CD8-positive, alpha-beta memory T cell (primary cell): ENCODE measurements at regions of chr1 and their contacts with region 1.

Region 1: GRCh38 chr1:11661103-11661502 is 2.9 kb upstream of the FBXO6 start:
- DNase-seq: no peak
- H3K4me3 ChIP-seq: no peak overlapping the region
- H3K4me3 Mint-ChIP-seq: peak overlapping the region in 1 of 7 donors; percentile 54
- H3K27ac ChIP-seq: no peak overlapping the region
- H3K27ac Mint-ChIP-seq: peak overlapping the region in 1 of 8 donors; percentile 50
- H3K4me1 ChIP-seq: peaks cover 8% of the 10 kb centered on the region
- H3K4me1 Mint-ChIP-seq: peaks cover under 1 to 7% (median 5%) of the 10 kb centered on the region in 3 donors
- H3K27me3 ChIP-seq: no peaks in the 10 kb centered on the region
- H3K27me3 Mint-ChIP-seq: no peaks in the 10 kb centered on the region

Region 2: GRCh38 chr1:11590395-11590794 is 70.7 kb before region 1 on chr1:
- CTCF ChIA-PET with region 1: no interaction called
- POLR2A ChIA-PET with region 1: no interaction called
- DNase-seq: no peak
- H3K4me3 ChIP-seq: no peak overlapping the region
- H3K4me3 Mint-ChIP-seq: no peak overlapping the region
- H3K27ac ChIP-seq: no peak overlapping the region
- H3K27ac Mint-ChIP-seq: no peak overlapping the region
- H3K4me1 ChIP-seq: no peaks in the 10 kb centered on the region
- H3K4me1 Mint-ChIP-seq: no peaks in the 10 kb centered on the region
- H3K27me3 ChIP-seq: no peaks in the 10 kb centered on the region
- H3K27me3 Mint-ChIP-seq: peaks cover 16 to 44% of the 10 kb centered on the region in 2 donors

Region 3: GRCh38 chr1:11629184-11630016 is 31.7 kb before region 1 on chr1:
- CTCF ChIA-PET with region 1: no interaction called
- POLR2A ChIA-PET with region 1: no interaction called
- DNase-seq: no peak
- H3K4me3 ChIP-seq: no peak overlapping the region
- H3K4me3 Mint-ChIP-seq: no peak overlapping the region
- H3K27ac ChIP-seq: no peak overlapping the region
- H3K27ac Mint-ChIP-seq: no peak overlapping the region
- H3K4me1 ChIP-seq: no peaks in the 10 kb centered on the region
- H3K4me1 Mint-ChIP-seq: peaks cover 0 to 1% (median 0%) of the 10 kb centered on the region in 3 donors
- H3K27me3 ChIP-seq: no peaks in the 10 kb centered on the region
- H3K27me3 Mint-ChIP-seq: peaks cover 12 to 63% of the 10 kb centered on the region in 2 donors

Region 4: DNA sequence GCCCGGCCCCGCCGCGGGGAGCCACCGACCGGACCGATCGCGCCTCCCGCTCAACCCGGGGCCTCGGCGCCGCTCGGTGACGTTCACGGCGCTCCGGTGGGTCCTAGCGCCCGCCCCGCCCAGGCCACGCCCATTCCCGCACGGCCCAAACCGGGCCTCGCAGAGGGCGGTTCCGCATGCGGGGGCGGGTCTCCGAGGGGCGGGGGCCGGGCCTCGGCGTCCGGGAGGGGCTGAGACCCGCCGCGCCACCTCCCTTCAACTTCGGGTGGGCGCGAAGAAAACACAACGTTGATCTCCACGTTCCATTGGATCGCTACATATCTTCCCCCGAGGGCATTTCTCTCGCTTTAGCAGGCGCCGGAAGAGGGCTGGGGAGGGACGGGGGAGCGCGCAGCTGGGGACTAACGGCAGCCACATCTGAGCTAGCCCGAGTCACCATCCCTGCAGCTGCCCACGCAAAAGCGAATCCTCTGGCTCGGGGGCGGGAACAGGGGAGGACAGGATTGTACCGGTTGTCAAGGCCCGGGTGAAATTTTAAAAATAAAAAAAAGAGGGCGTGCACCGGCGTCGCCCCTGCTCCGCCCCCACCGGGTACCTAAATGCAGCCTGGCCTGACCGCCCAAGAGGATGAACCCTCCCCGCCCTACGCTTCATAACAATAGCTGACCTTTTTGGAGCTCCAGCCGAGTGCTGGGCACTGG is 20.1 kb after region 1 on chr1 and contains the start of gene MAD2L2:
- CTCF ChIA-PET with region 1: interaction called, 26 read pairs
- POLR2A ChIA-PET with region 1: interaction called, 9 read pairs
- DNase-seq: peak; percentile 86 to 92 (median 90)
- H3K4me3 ChIP-seq: peak within 1 kb of the TSS; percentile 78
- H3K4me3 Mint-ChIP-seq: peak within 1 kb of the TSS; percentile 89 to 99 (median 95)
- H3K27ac ChIP-seq: peak within 1 kb of the TSS; percentile 64
- H3K27ac Mint-ChIP-seq: peak within 1 kb of the TSS; percentile 84 to 94 (median 91)
- H3K4me1 ChIP-seq: peaks cover 7% of the 10 kb centered on the region
- H3K4me1 Mint-ChIP-seq: peaks cover 18 to 28% (median 22%) of the 10 kb centered on the region in 3 donors
- H3K27me3 ChIP-seq: no peaks in the 10 kb centered on the region
- H3K27me3 Mint-ChIP-seq: peaks cover 3 to 4% of the 10 kb centered on the region in 2 donors
- total RNA-seq, gene MAD2L2: 60.1 to 66.2 TPM